Activated CD8-positive, alpha-beta T cell treated with anti-CD3 and anti-CD28 coated beads, Interleukin-2, amount 10 ng/mL, durations not matched to agents 7 days and 5 days (primary cell): ENCODE measurements at regions of chr12 and their contacts with region 1.

Region 1: DNA sequence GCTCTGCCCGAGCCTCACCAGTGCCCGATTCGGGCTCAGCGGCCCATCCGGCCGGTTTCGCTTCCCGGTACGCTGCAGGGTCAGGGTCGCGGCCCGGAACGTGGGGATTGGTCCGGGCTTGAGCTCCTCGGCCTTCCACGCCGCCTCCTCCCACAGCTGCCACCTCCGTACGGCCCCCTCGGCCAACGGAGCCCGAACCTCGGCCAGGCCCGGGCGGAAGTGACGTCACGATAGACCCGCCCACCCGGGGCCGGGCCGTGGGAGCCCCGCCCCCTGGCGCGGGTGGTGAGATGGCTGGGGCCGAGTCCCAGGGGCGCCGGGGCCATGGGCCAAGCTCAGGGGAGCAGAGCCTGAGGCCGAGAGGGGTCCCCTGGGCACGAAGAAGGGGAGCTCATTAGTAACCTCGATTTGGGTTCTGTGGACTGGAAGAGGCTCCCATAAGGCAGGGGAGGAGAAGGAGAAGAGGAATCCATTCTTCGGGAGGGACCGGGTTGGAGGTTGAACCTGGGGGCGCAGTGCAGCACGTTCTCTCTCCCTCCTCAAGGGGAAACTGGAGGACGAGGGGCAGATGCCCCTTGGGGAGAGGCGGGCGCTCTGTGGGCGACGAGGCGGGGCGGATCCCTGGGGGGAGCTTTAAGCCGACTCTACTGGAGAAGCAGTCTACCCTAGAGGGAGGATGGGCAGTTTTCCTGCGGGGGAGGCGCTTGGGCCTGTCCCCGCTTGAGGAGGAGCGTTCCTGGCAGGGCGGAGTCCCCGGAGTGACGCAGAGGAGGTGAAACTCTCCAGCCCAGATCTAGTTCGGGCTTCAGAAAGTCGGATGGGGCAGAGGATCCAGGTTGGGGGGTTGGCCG is at the start of gene MLF2:
- DNase-seq: peak; percentile 99
- ATAC-seq: peak; percentile 96
- H3K4me3 Mint-ChIP-seq: peak within 1 kb of the TSS; percentile 91
- H3K27ac Mint-ChIP-seq: peak within 1 kb of the TSS; percentile 99
- H3K4me1 Mint-ChIP-seq: peaks cover 29% of the 10 kb centered on the region
- H3K27me3 Mint-ChIP-seq: peaks cover 4% of the 10 kb centered on the region
- total RNA-seq, gene MLF2: 109 to 113 TPM

Region 2: DNA sequence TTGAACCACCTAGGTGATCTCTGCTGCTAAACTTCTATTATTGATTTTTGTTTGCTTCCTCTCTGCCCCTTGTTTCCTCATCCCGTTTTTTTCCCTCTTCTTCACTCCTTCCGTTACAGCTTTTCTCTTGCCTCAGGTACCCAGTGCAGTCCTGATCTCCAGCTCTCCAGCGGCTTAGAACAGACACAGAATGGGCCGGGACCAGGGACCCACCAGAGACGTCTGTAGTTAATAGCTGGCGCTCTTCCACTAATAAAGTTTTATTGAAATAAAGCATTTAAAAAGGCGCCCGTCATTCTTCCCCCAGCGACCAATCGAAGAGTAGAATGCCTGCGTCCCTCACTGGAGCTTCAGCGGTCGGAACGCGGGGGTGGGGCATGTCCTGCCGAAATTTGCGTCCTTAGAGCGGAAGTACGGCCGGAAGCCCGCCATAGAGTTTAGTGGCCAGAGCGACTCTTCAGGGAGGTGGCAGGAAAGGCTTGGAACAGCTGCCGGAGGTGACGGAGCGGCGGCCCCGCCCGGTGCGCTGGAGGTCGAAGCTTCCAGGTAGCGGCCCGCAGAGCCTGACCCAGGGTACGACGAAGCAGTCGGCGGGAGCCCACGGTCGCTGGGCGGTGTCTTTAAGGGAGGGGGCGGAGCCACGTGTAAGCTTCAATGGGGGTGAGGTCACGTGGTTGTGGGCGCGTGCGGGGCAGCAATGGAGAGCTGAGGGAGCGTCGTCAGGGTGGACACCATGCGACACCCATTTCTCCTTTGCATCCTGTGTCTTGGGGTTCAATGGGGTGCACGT is 29.3 kb before region 1 on chr12 and contains the start of gene COPS7A:
- CTCF ChIA-PET with region 1: interaction called, 32 read pairs
- POLR2A ChIA-PET with region 1: interaction called, 31 read pairs
- DNase-seq: peak; percentile 100
- ATAC-seq: peak; percentile 96
- H3K4me3 Mint-ChIP-seq: peak within 1 kb of the TSS; percentile 84
- H3K27ac Mint-ChIP-seq: peak within 1 kb of the TSS; percentile 93
- H3K4me1 Mint-ChIP-seq: peaks cover 29% of the 10 kb centered on the region
- H3K27me3 Mint-ChIP-seq: no peaks in the 10 kb centered on the region
- total RNA-seq, gene COPS7A: 26.9 to 29.7 TPM

Region 3: GRCh38 chr12:6764011-6764828 is 11.1 kb after region 1 on chr12:
- CTCF ChIA-PET with region 1: interaction called, 378 read pairs
- POLR2A ChIA-PET with region 1: interaction called, 35 read pairs
- DNase-seq: peak; percentile 75
- ATAC-seq: peak; percentile 67
- H3K4me3 Mint-ChIP-seq: peak overlapping the region; percentile 19
- H3K27ac Mint-ChIP-seq: peak overlapping the region; percentile 23
- H3K4me1 Mint-ChIP-seq: peaks cover 43% of the 10 kb centered on the region
- H3K27me3 Mint-ChIP-seq: peaks cover 43% of the 10 kb centered on the region

Region 4: DNA sequence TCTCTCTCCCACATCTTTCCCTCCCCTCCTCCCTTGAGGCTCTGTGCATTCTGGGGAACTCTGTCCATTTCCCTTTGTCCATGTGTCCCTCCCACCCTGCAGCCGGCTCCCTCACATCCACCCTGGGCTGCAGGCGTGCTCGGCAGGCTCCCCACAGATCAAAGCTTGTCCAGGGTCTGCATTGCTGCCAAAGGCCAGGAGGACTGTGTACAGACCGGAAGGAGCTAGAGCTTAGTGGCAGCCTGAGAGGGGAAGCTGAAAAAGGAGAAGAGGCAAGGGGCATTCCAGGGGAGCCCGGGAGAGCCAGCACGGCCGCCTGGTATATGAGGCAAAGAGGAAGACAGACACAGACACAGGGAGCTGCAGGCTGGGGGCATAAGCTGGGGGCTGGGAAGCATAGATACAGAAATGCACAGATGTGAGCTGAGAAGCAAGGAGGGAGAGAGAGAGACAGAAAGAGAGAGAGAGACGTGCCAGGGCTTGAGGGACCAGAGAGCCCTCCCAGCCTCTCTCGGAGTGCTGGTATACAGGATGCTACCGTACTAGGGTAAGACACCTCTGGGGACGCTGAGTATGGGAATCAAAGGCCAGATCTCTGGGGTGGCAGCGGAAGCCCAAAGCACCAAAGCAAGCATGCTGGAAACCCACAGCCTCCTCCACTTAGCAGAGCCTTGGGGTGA is 39.5 kb after region 1 on chr12:
- CTCF ChIA-PET with region 1: interaction called, 21 read pairs
- POLR2A ChIA-PET with region 1: no interaction called
- DNase-seq: peak; percentile 69
- ATAC-seq: peak; percentile 90
- H3K4me3 Mint-ChIP-seq: peak overlapping the region; percentile 35
- H3K27ac Mint-ChIP-seq: peak overlapping the region; percentile 34
- H3K4me1 Mint-ChIP-seq: peaks cover 30% of the 10 kb centered on the region
- H3K27me3 Mint-ChIP-seq: peaks cover 28% of the 10 kb centered on the region

Region 5: GRCh38 chr12:6833189-6833890 is 80.2 kb after region 1 on chr12:
- CTCF ChIA-PET with region 1: interaction called, 116 read pairs
- POLR2A ChIA-PET with region 1: interaction called, 3 read pairs
- DNase-seq: no peak
- ATAC-seq: no peak
- H3K4me3 Mint-ChIP-seq: no peak overlapping the region
- H3K27ac Mint-ChIP-seq: no peak overlapping the region
- H3K4me1 Mint-ChIP-seq: peaks cover 12% of the 10 kb centered on the region
- H3K27me3 Mint-ChIP-seq: peaks cover 28% of the 10 kb centered on the region

Region 6: DNA sequence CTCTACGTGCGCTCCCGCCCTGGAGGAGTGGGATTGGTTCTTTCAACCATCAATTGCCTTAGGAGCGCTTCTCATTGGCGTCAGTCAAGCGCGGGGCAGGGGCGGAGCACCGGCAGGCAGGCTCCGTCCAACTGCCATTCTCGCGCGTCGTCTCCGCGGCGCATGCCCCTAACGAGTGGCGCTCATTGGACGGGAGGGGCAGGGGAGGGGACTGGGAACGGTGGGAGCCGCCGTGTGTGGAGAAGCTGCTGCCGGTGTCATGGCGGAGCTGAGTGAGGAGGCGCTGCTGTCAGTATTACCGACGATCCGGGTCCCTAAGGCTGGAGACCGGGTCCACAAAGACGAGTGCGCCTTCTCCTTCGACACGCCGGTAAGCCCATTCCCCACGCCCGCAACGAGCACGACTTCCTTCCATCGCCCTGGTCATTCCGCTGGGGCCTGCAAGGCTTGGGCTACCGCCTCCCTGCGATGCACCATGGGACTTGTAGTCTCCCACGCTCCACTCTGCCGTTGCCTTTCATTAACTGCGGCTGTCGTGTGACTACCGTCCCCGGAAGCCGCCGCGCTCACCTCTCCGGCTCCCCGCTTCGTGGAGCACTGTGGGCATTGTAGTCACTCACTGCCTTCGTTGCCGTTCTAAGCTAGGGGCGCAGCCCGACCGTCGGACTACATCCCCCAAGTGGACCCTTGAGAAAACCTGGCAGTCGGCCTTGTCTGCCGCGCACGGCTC is 98.9 kb after region 1 on chr12 and contains the start of gene USP5:
- CTCF ChIA-PET with region 1: interaction called, 15 read pairs
- POLR2A ChIA-PET with region 1: interaction called, 21 read pairs
- DNase-seq: peak; percentile 99
- ATAC-seq: peak; percentile 83
- H3K4me3 Mint-ChIP-seq: peak within 1 kb of the TSS; percentile 90
- H3K27ac Mint-ChIP-seq: peak within 1 kb of the TSS; percentile 98
- H3K4me1 Mint-ChIP-seq: peaks cover 44% of the 10 kb centered on the region
- H3K27me3 Mint-ChIP-seq: no peaks in the 10 kb centered on the region
- total RNA-seq, gene USP5: 105 to 108 TPM